Posterior cingulate gyrus (tissue), 11 donors: ENCODE measurements at regions of chr6 and their contacts with region 1.

Region 1: DNA sequence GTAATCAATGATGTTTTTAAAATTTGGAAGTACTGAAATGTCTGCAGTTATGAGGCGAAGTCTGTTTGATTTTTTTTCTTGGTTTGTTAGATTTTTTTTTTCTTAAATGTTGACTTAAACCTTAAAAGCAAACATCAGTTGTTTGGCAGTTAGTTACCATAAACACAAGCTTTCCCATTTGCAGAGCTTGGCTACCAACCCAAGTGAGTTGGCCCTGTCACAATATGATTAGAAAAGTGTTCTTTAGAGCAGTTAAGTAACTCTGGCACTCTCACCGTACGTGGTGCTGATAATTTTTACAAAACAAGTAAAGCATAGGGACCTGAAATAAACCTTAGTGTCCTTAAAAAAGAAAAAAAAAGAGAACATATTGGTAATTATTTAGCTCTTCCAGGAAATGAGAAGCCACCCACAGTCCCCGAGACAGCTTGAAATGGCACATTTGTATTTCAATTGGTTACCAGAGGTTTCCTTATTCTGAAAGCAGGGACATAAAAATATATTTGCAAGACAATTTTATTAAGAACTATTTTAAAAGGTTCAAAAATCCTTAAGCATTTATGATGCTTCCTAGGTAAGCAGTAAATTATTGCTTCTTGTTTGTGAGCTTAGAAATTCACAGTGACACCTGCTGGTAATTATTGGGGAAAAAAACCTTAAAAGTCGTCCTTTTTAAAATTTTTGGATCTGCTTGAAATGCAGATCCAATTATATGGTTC is 3.9 kb downstream of the HEY2 start:
- DNase-seq: no peak

Region 2: DNA sequence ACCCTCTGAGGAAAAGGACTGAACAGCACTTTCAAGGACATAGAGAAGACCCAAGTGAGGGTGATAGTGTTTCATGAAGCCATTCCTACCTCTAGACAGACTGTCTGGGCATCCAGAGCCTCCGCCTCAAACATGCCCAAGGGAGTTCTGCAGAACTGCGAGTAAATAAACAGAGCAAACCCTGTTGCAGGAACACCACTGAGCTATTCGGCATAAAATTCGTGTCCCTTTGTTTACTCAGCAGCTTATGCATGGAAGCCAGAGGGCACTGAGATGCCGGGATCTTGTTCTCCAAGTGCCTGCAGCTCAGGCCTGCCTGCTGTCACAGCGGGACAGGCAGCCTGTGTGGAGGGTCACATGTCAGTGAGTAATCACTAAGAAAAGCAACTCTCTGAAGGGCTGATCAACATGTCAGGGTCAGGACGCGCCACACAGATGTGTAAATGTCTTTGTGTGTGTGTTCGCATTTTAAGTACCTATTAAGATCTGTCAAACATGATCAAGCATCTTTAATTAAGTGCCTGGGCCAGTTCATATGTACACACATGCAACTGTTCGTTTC is 168.8 kb before region 1 on chr6:
- intact Hi-C with region 1: loop called (anchors 5 kb)
- DNase-seq: peak; percentile 45 to 96 (median 72)